HEK293T (cell line): ENCODE measurements at regions of chr2 and their contacts with region 1.

Region 1: GRCh38 chr2:241734467-241735208 is at the start of gene D2HGDH:
- DNase-seq: peak; percentile 97

Region 2: GRCh38 chr2:241609859-241610793 is 124.5 kb before region 1 on chr2:
- CTCF ChIA-PET with region 1: no interaction called
- POLR2A ChIA-PET with region 1: no interaction called
- DNase-seq: peak; percentile 85

Region 3: GRCh38 chr2:241702132-241703031 is 32.3 kb before region 1 on chr2:
- CTCF ChIA-PET with region 1: no interaction called
- POLR2A ChIA-PET with region 1: interaction called, 10 read pairs
- DNase-seq: peak; percentile 84